ENCODE measurements at regions of chrX and their contacts with region 1.

Region 1: GRCh38 chrX:103918581-103919269 is 43.7 kb upstream of the TMSB15B start:
- DNase-seq: peak; percentile 35 to 64 (median 44)
- ATAC-seq: peak; percentile 85
- H3K4me3 ChIP-seq: peak overlapping the region; percentile 5 to 7
- H3K27ac ChIP-seq: peak overlapping the region in 3 of 4 donors; percentile 35 to 62 (median 40)
- H3K4me1 ChIP-seq: no peaks in the 10 kb centered on the region
- H3K27me3 ChIP-seq: no peaks in the 10 kb centered on the region
- CTCF ChIP-seq: no peak
- POLR2A ChIP-seq: peak in 2 of 3 donors; percentile 34 to 35

Region 2: DNA sequence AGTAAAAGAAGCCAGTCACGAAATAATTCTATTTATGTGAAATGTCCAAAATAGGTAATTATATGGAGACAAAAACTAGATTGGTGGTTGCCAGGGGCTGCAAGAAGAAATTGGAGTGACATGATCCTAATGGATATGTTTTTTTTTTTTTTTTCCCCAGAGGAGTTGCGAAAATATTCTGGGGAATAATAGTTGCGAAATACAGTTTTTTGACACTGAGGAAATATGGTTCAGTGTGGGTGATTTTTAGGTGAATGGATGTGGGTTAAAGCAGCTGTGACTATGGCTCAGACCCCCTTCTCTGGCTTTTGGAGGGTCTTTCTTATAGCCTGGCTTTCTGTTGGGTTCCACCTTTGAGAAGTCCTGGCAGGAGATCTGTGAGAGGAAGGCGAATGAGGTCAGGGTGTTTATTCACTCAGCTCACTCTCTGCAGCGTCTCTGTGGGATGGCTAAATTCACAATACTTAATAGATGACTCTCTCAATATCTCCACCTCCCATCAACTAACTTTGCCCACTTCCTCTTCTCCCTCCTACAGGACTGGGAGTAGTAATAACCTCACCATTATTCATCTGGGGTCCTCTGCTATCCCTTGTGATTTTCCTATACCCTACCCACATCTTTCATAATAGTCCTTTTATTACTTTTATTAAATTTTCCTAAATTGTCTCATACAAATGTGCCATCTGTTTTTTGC is 71.4 kb before region 1 on chrX:
- intact Hi-C with region 1: no loop called
- DNase-seq: no peak
- ATAC-seq: no peak
- H3K4me3 ChIP-seq: no peak overlapping the region
- H3K27ac ChIP-seq: no peak overlapping the region
- H3K4me1 ChIP-seq: no peaks in the 10 kb centered on the region
- H3K27me3 ChIP-seq: no peaks in the 10 kb centered on the region
- CTCF ChIP-seq: no peak
- POLR2A ChIP-seq: no peak

Region 3: DNA sequence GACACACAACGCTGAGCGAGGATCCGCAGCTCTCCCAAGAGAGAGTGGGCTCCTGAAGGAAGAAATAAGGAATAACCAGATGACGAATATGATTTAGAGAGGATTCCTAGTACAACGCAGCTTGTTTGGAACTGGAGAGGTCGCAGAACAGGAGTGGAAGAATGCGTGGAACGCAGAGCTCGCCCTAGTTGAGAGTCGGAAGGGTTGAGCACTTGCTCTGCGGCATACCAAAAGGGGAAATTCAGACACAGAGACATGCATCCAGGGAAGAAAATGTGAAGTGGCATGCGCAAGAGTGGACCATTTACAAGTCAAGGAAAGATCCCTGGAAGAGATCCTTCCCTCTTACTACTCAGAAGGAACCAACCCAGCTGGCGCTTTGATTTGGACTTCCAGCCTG is 88.5 kb after region 1 on chrX:
- intact Hi-C with region 1: loop called (anchors 2 kb)
- DNase-seq: no peak
- ATAC-seq: no peak
- H3K4me3 ChIP-seq: no peak overlapping the region
- H3K27ac ChIP-seq: no peak overlapping the region
- H3K4me1 ChIP-seq: no peaks in the 10 kb centered on the region
- H3K27me3 ChIP-seq: no peaks in the 10 kb centered on the region
- CTCF ChIP-seq: no peak
- POLR2A ChIP-seq: no peak

Measured in body of pancreas (tissue), 4 donors.